ENCODE measurements at regions of chr11 and their contacts with region 1.

Region 1: GRCh38 chr11:79691445-79691844 is 250.6 kb upstream of the TENM4 start:
- DNase-seq: no peak
- H3K4me3 ChIP-seq: no peak overlapping the region
- H3K27ac ChIP-seq: no peak overlapping the region
- H3K4me1 ChIP-seq: no peaks in the 10 kb centered on the region
- H3K27me3 ChIP-seq: no peaks in the 10 kb centered on the region
- CTCF ChIP-seq: no peak
- EP300 ChIP-seq: no peak
- POLR2A ChIP-seq: no peak

Region 2: GRCh38 chr11:79352349-79352703 is 339.1 kb before region 1 on chr11:
- intact Hi-C with region 1: no loop called
- DNase-seq: no peak
- H3K4me3 ChIP-seq: no peak overlapping the region
- H3K27ac ChIP-seq: no peak overlapping the region
- H3K4me1 ChIP-seq: peaks cover 14% of the 10 kb centered on the region
- H3K27me3 ChIP-seq: no peaks in the 10 kb centered on the region
- CTCF ChIP-seq: no peak
- EP300 ChIP-seq: no peak
- POLR2A ChIP-seq: no peak

Region 3: DNA sequence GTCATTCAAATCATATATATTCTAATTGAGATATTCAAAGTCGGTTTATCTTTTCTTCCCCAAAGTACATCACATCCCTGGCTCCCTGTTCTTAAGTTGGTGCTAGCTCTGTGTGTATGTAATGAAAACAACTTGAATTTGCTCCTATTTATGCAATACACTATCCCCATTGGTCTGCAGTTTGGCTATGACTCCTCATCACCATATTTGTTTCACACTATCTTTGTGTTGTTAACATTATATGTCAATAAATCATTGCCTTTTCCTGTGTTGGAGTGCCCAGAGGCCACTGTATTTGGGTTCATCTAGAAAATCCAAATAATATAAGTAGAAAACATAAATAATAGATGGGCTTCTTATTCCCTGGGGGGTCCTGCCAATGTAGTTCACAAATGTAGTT is 56.0 kb after region 1 on chr11:
- intact Hi-C with region 1: no loop called
- DNase-seq: no peak
- H3K4me3 ChIP-seq: no peak overlapping the region
- H3K27ac ChIP-seq: no peak overlapping the region
- H3K4me1 ChIP-seq: no peaks in the 10 kb centered on the region
- H3K27me3 ChIP-seq: no peaks in the 10 kb centered on the region
- CTCF ChIP-seq: no peak
- EP300 ChIP-seq: no peak
- POLR2A ChIP-seq: no peak

Region 4: GRCh38 chr11:81089242-81089641 is 1397.8 kb after region 1 on chr11:
- intact Hi-C with region 1: loop called in 1 of 4 experiments (anchors 5 kb)
- DNase-seq: no peak
- H3K4me3 ChIP-seq: no peak overlapping the region
- H3K27ac ChIP-seq: no peak overlapping the region
- H3K4me1 ChIP-seq: no peaks in the 10 kb centered on the region
- H3K27me3 ChIP-seq: no peaks in the 10 kb centered on the region
- CTCF ChIP-seq: no peak
- EP300 ChIP-seq: no peak
- POLR2A ChIP-seq: no peak

Measured in ovary (tissue), 10 donors.